Transverse colon (tissue), 4 donors: ENCODE measurements at regions of chr5 and their contacts with region 1.

Region 1: DNA sequence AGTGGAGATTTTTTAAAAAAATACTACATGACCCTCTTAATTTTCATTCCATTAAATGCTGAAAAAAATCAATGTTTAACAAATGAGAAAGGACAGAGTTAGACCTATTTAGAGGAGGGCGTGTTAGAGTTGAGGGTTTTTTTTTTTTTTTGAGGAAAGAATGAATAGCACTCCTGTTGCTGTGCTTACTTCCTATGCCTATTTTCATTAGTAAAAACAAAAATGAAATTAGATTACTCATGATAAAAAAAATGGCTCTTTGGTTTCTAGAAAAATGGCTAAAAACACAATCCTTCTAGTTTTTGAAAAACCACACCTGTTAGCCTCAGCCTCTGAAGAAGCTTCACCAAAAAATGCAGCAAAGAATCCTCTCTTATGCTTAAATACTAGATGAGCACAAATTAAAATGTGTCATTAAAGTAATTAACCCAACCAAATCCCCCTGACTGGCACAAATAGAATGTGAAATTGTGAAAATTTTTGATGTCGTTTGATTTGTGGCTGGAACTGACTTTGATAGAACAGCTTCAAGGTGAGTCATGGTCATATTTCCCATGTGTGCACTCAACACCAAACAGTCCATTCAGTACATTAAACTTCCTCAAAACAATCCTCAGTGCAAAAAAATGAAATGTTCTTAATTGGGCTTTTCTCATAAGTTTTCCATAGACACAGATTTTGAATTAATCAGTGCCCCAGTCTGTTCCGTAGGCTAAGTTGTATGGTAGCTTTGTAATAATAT is 98.0 kb downstream of the MACIR start:
- DNase-seq: no peak
- H3K4me3 ChIP-seq: no peak overlapping the region
- H3K27ac ChIP-seq: no peak overlapping the region
- H3K4me1 ChIP-seq: no peaks in the 10 kb centered on the region
- H3K27me3 ChIP-seq: no peaks in the 10 kb centered on the region
- CTCF ChIP-seq: no peak
- EP300 ChIP-seq: no peak
- POLR2A ChIP-seq: no peak

Region 2: GRCh38 chr5:103333376-103333775 is 23.1 kb before region 1 on chr5:
- in situ Hi-C with region 1: no loop called
- intact Hi-C with region 1: no loop called
- DNase-seq: no peak
- H3K4me3 ChIP-seq: no peak overlapping the region
- H3K27ac ChIP-seq: no peak overlapping the region
- H3K4me1 ChIP-seq: no peaks in the 10 kb centered on the region
- H3K27me3 ChIP-seq: no peaks in the 10 kb centered on the region
- CTCF ChIP-seq: no peak
- EP300 ChIP-seq: no peak
- POLR2A ChIP-seq: no peak

Region 3: DNA sequence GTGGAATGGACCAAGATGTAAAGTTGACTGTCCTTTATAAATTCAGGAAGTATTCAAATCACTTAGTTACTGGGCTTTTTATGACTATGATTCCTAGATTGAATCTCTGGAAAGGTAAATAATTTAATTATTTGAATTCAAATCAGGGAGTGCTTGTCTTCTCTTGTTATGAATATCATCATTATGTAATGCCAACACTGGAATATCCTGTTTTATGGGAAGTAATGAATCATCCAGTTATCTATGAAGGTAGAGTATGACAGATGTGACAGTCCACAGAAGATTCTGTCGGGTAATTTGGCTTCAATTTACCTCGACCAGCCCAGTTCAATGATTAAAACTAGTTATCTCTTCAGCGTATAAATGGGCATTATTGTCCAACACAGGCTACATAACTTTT is 347.1 kb after region 1 on chr5:
- in situ Hi-C with region 1: no loop called
- intact Hi-C with region 1: no loop called
- DNase-seq: no peak
- H3K4me3 ChIP-seq: no peak overlapping the region
- H3K27ac ChIP-seq: no peak overlapping the region
- H3K4me1 ChIP-seq: no peaks in the 10 kb centered on the region
- H3K27me3 ChIP-seq: no peaks in the 10 kb centered on the region
- CTCF ChIP-seq: no peak
- EP300 ChIP-seq: no peak
- POLR2A ChIP-seq: no peak

Region 4: GRCh38 chr5:104186100-104186499 is 829.6 kb after region 1 on chr5:
- in situ Hi-C with region 1: no loop called
- intact Hi-C with region 1: loop called (anchors 5 kb)
- DNase-seq: no peak
- H3K4me3 ChIP-seq: no peak overlapping the region
- H3K27ac ChIP-seq: no peak overlapping the region
- H3K4me1 ChIP-seq: no peaks in the 10 kb centered on the region
- H3K27me3 ChIP-seq: no peaks in the 10 kb centered on the region
- CTCF ChIP-seq: no peak
- EP300 ChIP-seq: no peak
- POLR2A ChIP-seq: no peak